ENCODE measurements at regions of chr2 and their contacts with region 1.

Region 1: DNA sequence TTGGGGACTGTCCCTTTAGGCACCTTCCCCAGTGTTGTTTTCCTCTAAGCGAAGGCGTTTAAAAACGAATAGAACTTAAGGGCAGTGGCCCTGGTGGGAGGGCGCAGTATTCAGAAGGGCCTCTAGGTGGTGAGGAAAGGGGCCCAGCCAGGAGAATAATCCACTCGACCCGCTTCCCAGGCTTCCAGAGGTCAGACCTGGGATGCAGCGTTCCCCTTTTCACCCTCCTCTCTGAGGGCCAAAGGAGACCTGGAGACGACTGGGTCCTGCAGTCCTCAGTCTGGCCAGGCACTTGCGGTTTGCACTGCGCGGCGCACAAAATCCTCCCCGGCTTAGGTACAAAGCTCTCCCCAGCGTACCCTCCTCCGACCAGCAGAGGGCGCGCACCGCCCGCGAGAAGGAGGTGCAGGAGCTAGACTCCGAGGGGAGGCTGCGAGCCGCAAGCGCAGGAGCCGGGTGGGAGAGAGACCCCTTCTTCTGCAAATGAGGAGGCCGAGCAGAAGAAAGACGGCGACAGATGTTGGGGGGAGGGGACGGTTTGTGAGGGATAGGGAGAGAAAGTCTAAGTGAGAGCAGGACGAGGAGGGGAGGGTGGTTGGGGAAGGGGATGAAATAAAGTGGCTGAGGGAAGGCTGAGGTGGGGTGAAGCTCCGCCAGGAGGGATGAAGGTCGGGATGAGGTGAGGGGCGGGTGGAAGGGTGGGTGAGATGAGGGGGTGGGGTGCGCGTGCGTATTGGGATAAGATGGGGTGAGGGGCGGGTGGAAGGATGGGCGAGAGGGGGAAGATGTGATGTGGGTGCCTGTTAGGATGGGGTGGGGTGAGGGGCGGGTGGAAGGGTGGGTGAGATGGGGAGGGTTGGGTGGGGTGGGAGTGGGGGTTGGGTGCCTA is 4.9 kb downstream of the FEV start:
- DNase-seq: no peak
- H3K4me3 ChIP-seq: peak overlapping the region; percentile 42
- H3K27ac ChIP-seq: no peak overlapping the region
- H3K27me3 ChIP-seq: peaks cover 69% of the 10 kb centered on the region
- CTCF ChIP-seq: peak; percentile 86

Region 2: DNA sequence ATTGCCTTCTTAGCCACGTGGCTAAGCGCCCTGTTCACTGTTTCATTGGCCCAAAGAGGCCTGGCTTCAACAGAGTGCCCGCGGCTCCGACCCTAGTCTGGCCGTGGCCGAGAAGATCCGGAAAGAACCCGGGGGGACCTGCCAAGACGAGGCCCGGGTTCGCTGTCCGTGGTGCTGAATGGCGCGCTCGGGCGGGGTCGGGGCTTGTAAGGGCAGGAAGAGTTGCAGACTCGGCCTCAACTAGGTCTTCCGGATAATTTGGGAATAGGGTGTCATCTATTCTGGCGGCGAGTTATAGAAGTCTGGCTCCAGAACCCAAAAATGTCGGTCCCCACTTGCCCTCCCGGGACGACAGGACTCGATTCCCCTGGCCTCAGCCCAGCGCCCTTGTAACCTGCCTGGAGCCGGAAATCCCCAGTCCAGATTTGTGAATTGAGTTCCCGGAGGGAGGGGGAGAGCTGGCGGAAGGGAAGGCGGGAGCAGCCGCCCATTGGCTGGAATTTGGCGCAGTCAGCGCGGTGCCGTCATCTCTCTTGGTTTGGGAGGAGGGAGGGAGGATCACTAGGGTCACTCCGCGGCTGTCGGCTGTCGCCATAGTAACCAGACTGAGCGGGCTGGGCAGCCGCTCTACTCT is 17.1 kb before region 1 on chr2:
- CTCF ChIA-PET with region 1: interaction called, 17 read pairs
- POLR2A ChIA-PET with region 1: no interaction called
- DNase-seq: no peak
- H3K4me3 ChIP-seq: peak overlapping the region; percentile 41
- H3K27ac ChIP-seq: peak overlapping the region; percentile 85
- H3K27me3 ChIP-seq: peaks cover 41% of the 10 kb centered on the region
- CTCF ChIP-seq: no peak

Region 3: DNA sequence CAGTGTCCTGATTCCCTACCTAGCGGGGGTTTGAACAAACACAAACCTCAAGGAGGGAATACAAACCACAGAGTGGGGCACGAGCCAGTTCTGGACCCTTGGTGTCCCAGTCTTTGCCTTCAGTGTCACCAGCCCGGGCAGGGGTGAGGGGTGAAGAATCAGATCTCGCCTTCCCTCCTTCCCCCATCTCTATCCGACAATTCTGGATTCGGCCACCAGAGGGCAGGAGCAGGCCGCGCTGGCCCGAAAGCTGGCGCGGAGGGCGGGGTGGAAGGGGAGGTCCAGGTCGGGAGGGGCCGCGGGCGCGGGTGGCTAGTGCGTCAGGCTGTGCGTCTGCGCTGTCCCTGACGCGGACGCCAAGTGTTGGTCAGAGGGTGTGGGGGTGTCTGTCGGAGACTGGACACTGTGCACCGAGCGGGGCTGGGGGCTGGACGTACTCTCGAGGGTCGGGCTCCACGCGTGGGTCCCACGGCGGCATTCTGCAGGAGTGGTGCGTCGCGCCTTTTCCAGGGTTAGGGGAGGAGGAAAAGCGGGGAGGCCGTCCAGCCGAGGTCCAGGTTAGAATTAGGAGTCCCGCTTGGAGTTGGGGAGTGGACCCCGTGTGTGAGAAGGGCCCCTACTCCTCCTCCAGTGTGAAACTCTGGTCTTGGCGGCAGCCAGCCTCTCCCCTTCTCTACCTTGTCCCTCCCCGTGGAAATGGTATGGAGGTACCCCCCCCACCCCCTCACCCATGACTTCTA is 16.1 kb after region 1 on chr2:
- CTCF ChIA-PET with region 1: interaction called, 11 read pairs
- POLR2A ChIA-PET with region 1: no interaction called
- DNase-seq: peak; percentile 27
- H3K4me3 ChIP-seq: peak overlapping the region; percentile 52
- H3K27ac ChIP-seq: no peak overlapping the region
- H3K27me3 ChIP-seq: peaks cover 82% of the 10 kb centered on the region
- CTCF ChIP-seq: peak; percentile 89

Region 4: DNA sequence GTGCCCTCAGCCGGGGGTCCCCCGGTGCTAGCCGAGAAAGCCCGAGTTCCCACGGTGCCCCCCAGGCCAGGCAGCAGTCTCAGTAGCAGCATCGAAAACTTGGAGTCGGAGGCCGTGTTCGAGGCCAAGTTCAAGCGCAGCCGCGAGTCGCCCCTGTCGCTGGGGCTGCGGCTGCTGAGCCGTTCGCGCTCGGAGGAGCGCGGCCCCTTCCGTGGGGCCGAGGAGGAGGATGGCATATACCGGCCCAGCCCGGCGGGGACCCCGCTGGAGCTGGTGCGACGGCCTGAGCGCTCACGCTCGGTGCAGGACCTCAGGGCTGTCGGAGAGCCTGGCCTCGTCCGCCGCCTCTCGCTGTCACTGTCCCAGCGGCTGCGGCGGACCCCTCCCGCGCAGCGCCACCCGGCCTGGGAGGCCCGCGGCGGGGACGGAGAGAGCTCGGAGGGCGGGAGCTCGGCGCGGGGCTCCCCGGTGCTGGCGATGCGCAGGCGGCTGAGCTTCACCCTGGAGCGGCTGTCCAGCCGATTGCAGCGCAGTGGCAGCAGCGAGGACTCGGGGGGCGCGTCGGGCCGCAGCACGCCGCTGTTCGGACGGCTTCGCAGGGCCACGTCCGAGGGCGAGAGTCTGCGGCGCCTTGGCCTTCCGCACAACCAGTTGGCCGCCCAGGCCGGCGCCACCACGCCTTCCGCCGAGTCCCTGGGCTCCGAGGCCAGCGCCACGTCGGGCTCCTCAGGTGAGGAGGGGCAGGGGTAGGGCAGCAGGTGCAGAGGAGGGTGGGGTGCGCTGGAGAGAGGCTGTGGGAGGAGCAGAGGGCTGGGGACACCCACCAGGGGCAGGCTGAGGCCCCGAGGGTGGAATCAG is 504.5 kb after region 1 on chr2:
- CTCF ChIA-PET with region 1: no interaction called
- POLR2A ChIA-PET with region 1: no interaction called
- DNase-seq: no peak
- H3K4me3 ChIP-seq: no peak overlapping the region
- H3K27ac ChIP-seq: no peak overlapping the region
- H3K27me3 ChIP-seq: no peaks in the 10 kb centered on the region
- CTCF ChIP-seq: no peak